ENCODE measurements at regions of chr11 and their contacts with region 1.

Region 1: DNA sequence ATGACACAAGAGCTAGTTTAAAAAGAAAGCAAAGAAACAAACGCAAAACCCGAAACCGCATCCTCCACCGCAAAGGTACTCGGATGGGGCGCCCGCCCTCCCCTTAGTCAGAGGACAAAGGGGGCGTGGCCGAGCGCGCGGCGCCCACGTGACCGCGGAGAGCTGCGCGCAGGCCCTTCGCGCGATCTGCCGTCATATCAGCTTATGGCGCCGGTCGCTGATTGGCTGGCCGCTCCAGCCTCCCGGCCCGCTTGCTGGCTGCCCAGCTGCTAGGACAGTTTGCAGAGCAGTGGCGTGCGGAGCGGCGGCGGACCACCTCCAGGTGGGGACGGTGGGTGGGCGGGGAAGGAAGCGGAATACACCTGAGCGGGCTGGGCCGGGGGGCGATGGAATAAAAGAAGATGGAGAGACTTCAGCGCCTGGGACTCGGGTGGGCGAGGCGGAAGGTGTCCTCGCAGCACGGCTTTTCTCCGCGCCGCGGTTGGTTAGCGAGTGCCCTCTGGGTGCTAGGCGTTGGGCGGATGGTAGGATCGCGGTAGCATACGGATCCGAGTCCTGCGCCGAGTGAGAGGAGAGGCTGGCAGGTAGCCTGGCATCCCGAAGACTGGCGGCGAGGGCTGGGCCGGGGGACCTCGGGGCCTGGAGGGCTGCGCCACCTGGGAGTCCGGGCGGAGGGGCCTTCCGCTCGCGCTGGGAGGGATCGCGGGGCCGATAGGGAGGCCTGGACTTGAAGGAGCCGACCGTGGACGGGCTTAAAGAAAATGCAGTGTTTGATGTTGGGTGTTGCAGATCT is at the start of gene SC5D:
- DNase-seq: peak; percentile 94
- H3K4me3 ChIP-seq: peak within 1 kb of the TSS; percentile 50 to 92 (median 86)
- H3K27ac ChIP-seq: peak within 1 kb of the TSS; percentile 58
- H3K4me1 ChIP-seq: peaks cover 15% of the 10 kb centered on the region
- H3K27me3 ChIP-seq: peaks cover 3% of the 10 kb centered on the region in 2 experiments
- CTCF ChIP-seq: no peak
- POLR2A ChIP-seq: peak; percentile 81
- total RNA-seq, gene SC5D: 40.0 and 40.2 TPM in 2 replicates

Region 2: GRCh38 chr11:121249039-121249663 is 43.5 kb before region 1 on chr11:
- CTCF ChIA-PET with region 1: no interaction called
- POLR2A ChIA-PET with region 1: no interaction called
- dilution Hi-C with region 1: no loop called
- intact Hi-C with region 1: loop called (anchors 1 kb)
- DNase-seq: peak; percentile 54
- H3K4me3 ChIP-seq: no peak overlapping the region
- H3K27ac ChIP-seq: no peak overlapping the region
- H3K4me1 ChIP-seq: no peaks in the 10 kb centered on the region
- H3K27me3 ChIP-seq: peaks cover 0 to 2% of the 10 kb centered on the region in 2 experiments
- CTCF ChIP-seq: peak; percentile 45 to 58
- POLR2A ChIP-seq: no peak

Measured in endothelial cell of umbilical vein (primary cell).